ENCODE measurements at regions of chr12 and their contacts with region 1.

Region 1: DNA sequence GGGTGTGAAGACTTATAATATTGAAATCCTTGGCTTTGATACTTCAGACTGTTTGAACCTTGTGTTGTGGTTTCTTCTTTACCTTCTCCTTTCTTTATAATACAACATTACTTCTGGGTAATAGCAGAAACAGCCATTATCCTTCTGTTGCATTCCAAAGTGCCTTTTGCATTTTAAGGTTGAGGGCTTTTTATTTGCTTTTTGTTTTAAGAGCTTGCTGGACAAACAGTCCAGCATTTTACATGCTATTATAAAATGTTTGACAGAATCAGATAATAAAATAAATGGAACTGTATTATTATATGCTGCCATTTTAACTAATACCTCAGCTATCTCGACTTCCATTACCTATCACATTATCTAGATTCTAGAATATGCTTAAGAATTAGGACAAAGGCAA is 14.0 kb downstream of the RNF34 start:
- DNase-seq: no peak
- H3K4me3 ChIP-seq: no peak overlapping the region
- H3K27ac ChIP-seq: no peak overlapping the region
- H3K4me1 ChIP-seq: no peaks in the 10 kb centered on the region
- H3K27me3 ChIP-seq: no peaks in the 10 kb centered on the region
- CTCF ChIP-seq: no peak
- EP300 ChIP-seq: no peak
- POLR2A ChIP-seq: no peak

Region 2: GRCh38 chr12:121345151-121345815 is 68.6 kb before region 1 on chr12:
- intact Hi-C with region 1: no loop called
- DNase-seq: no peak
- H3K4me3 ChIP-seq: no peak overlapping the region
- H3K27ac ChIP-seq: no peak overlapping the region
- H3K4me1 ChIP-seq: no peaks in the 10 kb centered on the region
- H3K27me3 ChIP-seq: no peaks in the 10 kb centered on the region
- CTCF ChIP-seq: no peak
- EP300 ChIP-seq: no peak
- POLR2A ChIP-seq: no peak

Region 3: GRCh38 chr12:121443193-121443870 is 29.4 kb after region 1 on chr12:
- intact Hi-C with region 1: loop called in 1 of 4 experiments (anchors 2 kb)
- DNase-seq: peak; percentile 69 to 87 (median 80)
- H3K4me3 ChIP-seq: no peak overlapping the region
- H3K27ac ChIP-seq: no peak overlapping the region
- H3K4me1 ChIP-seq: peaks cover 4% of the 10 kb centered on the region
- H3K27me3 ChIP-seq: no peaks in the 10 kb centered on the region
- CTCF ChIP-seq: peak; percentile 49 to 67 (median 50)
- EP300 ChIP-seq: no peak
- POLR2A ChIP-seq: no peak